ENCODE measurements at regions of chr1 and their contacts with region 1.

Region 1: GRCh38 chr1:25204797-25205480 is 27.4 kb downstream of the SYF2 start:
- DNase-seq: no peak
- ATAC-seq: peak; percentile 68 to 70
- H3K4me3 ChIP-seq: no peak overlapping the region
- H3K27ac ChIP-seq: no peak overlapping the region
- H3K4me1 ChIP-seq: no peaks in the 10 kb centered on the region
- H3K27me3 ChIP-seq: no peaks in the 10 kb centered on the region
- CTCF ChIP-seq: peak; percentile 88

Region 2: GRCh38 chr1:24847995-24848881 is 356.7 kb before region 1 on chr1:
- intact Hi-C with region 1: loop called (anchors 10 kb)
- DNase-seq: peak; percentile 95
- ATAC-seq: peak; percentile 95 to 97
- H3K4me3 ChIP-seq: peak overlapping the region; percentile 64
- H3K27ac ChIP-seq: peak overlapping the region; percentile 82
- H3K4me1 ChIP-seq: peaks cover 18% of the 10 kb centered on the region
- H3K27me3 ChIP-seq: no peaks in the 10 kb centered on the region
- CTCF ChIP-seq: peak; percentile 95